ENCODE measurements at regions of chr3 and their contacts with region 1.

Region 1: GRCh38 chr3:196502775-196503195 is 783 bp downstream of the RNF168 start:
- DNase-seq: peak; percentile 64
- H3K4me3 Mint-ChIP-seq: peak overlapping the region; percentile 100
- H3K27ac Mint-ChIP-seq: peak overlapping the region; percentile 100
- H3K4me1 Mint-ChIP-seq: peaks cover 38% of the 10 kb centered on the region
- H3K27me3 Mint-ChIP-seq: peaks cover 8% of the 10 kb centered on the region

Region 2: GRCh38 chr3:195075199-195075940 is 1427.4 kb before region 1 on chr3:
- intact Hi-C with region 1: no loop called
- DNase-seq: no peak
- H3K4me3 Mint-ChIP-seq: no peak overlapping the region
- H3K27ac Mint-ChIP-seq: no peak overlapping the region
- H3K4me1 Mint-ChIP-seq: no peaks in the 10 kb centered on the region
- H3K27me3 Mint-ChIP-seq: peaks cover 3% of the 10 kb centered on the region

Region 3: GRCh38 chr3:195909644-195910508 is 592.9 kb before region 1 on chr3:
- intact Hi-C with region 1: loop called (anchors 5 kb)
- DNase-seq: peak; percentile 83
- H3K4me3 Mint-ChIP-seq: peak overlapping the region; percentile 72
- H3K27ac Mint-ChIP-seq: peak overlapping the region; percentile 55
- H3K4me1 Mint-ChIP-seq: peaks cover 37% of the 10 kb centered on the region
- H3K27me3 Mint-ChIP-seq: no peaks in the 10 kb centered on the region

Region 4: GRCh38 chr3:196219194-196219978 is 283.4 kb before region 1 on chr3:
- intact Hi-C with region 1: loop called (anchors 1 kb)
- DNase-seq: peak; percentile 56
- H3K4me3 Mint-ChIP-seq: peak overlapping the region; percentile 76
- H3K27ac Mint-ChIP-seq: peak overlapping the region; percentile 81
- H3K4me1 Mint-ChIP-seq: peaks cover 22% of the 10 kb centered on the region
- H3K27me3 Mint-ChIP-seq: peaks cover 3% of the 10 kb centered on the region

Region 5: DNA sequence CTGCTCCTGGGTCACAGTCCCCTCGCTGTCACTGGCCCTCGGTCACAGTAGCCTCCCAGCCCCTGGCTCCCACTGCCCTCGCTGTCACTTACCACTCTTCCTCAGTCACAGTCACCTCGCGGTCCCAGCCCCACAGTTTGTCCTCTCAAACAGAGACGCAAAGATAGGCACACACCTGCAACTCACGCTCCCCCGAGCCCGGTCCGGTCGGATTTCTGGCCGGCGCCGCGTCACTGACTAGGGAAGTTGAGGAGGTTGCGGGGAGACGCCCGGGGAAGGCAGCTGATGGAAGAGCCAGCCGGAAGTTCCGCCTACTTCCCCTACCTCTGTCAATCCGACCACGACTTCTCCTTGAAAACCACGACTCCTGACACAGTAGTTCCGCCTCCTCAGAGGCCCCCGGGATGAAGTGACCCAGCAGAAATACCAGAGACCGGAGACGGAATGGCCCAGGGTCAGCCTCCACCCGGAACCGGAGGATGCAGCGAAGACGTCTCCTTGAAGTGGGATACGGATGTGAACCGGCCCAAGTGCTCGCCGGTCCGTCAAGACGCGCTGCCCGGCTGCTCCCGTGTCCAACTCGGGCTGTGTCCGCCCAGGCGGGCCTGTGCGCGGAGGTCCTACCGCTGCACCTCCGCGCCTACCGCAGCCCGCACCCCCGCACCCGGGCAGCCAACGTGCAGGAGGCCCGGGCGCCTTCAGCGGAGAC is 215.2 kb before region 1 on chr3 and contains the start of gene PCYT1A:
- intact Hi-C with region 1: loop called (anchors 1 kb)
- DNase-seq: peak; percentile 72
- H3K4me3 Mint-ChIP-seq: peak within 1 kb of the TSS; percentile 99
- H3K27ac Mint-ChIP-seq: peak within 1 kb of the TSS; percentile 95
- H3K4me1 Mint-ChIP-seq: peaks cover 44% of the 10 kb centered on the region
- H3K27me3 Mint-ChIP-seq: no peaks in the 10 kb centered on the region
- total RNA-seq, gene PCYT1A: 54.7 and 57.0 TPM in 2 replicates

Region 6: DNA sequence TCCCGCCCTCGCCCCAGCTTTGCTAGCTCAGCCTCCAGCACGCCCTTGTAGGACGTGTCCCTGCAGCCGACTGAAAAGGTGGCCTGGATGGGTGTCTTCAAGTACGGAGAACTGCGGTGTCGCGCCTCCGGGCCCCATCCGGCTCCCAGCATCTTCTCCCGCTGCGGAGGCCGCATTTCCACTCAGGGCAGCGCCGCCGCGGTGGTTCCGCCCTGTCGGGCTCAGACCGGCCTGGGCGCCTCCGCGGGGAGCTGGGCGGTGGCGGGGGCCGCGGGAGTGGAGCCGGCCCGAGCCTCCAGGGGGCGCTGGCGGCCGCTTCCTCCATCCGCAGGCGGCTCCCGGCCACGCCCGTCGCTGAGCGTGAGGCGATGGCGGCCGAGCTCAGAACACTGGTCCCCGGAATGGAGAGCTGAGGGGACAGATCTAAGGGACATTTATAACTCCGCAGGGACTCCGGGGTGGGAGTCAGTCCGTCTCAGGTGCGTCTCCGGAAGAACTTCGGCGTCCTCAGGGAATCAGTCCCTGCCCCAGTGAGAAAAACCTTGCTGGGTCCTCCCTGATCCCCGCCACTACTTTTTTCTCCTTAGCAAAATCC is 26.0 kb after region 1 on chr3:
- intact Hi-C with region 1: loop called (anchors 1 kb)
- DNase-seq: peak; percentile 76
- H3K4me3 Mint-ChIP-seq: peak overlapping the region; percentile 76
- H3K27ac Mint-ChIP-seq: peak overlapping the region; percentile 75
- H3K4me1 Mint-ChIP-seq: peaks cover 8% of the 10 kb centered on the region
- H3K27me3 Mint-ChIP-seq: peaks cover 6% of the 10 kb centered on the region

Region 7: GRCh38 chr3:196711838-196712513 is 209.2 kb after region 1 on chr3 and contains the starts of genes CEP19 and PIGX:
- intact Hi-C with region 1: loop called (anchors 1 kb)
- DNase-seq: peak; percentile 91
- H3K4me3 Mint-ChIP-seq: peak within 1 kb of the TSS; percentile 90
- H3K27ac Mint-ChIP-seq: peak within 1 kb of the TSS; percentile 98
- H3K4me1 Mint-ChIP-seq: peaks cover 49% of the 10 kb centered on the region
- H3K27me3 Mint-ChIP-seq: no peaks in the 10 kb centered on the region
- total RNA-seq, gene CEP19: 3.9 and 4.1 TPM in 2 replicates
- total RNA-seq, gene PIGX: 49.7 and 52.1 TPM in 2 replicates